Activated CD4-positive, alpha-beta memory T cell treated with anti-CD3 and anti-CD28 coated beads for 36 hours (primary cell): ENCODE measurements at regions of chr6 and their contacts with region 1.

Region 1: GRCh38 chr6:38713812-38714211 is 1.3 kb upstream of the DNAH8 start:
- DNase-seq: peak; percentile 83
- H3K4me3 Mint-ChIP-seq: no peak overlapping the region
- H3K27ac Mint-ChIP-seq: peak overlapping the region; percentile 46
- H3K4me1 Mint-ChIP-seq: peaks cover 15% of the 10 kb centered on the region
- H3K27me3 Mint-ChIP-seq: peaks cover 21% of the 10 kb centered on the region

Region 2: GRCh38 chr6:38702558-38703397 is 11.0 kb before region 1 on chr6 and contains the start of gene GLO1:
- CTCF ChIA-PET with region 1: interaction called, 3 read pairs
- POLR2A ChIA-PET with region 1: interaction called, 5 read pairs
- intact Hi-C with region 1: loop called (anchors 1 kb)
- DNase-seq: peak; percentile 98
- H3K4me3 Mint-ChIP-seq: peak within 1 kb of the TSS; percentile 82
- H3K27ac Mint-ChIP-seq: peak within 1 kb of the TSS; percentile 79
- H3K4me1 Mint-ChIP-seq: peaks cover 37% of the 10 kb centered on the region
- H3K27me3 Mint-ChIP-seq: peaks cover 9% of the 10 kb centered on the region
- total RNA-seq, gene GLO1: 132 to 133 TPM

Region 3: GRCh38 chr6:38755177-38755576 is 41.4 kb after region 1 on chr6:
- CTCF ChIA-PET with region 1: no interaction called
- POLR2A ChIA-PET with region 1: no interaction called
- intact Hi-C with region 1: no loop called
- DNase-seq: no peak
- H3K4me3 Mint-ChIP-seq: no peak overlapping the region
- H3K27ac Mint-ChIP-seq: no peak overlapping the region
- H3K4me1 Mint-ChIP-seq: peaks cover 21% of the 10 kb centered on the region
- H3K27me3 Mint-ChIP-seq: peaks cover 5% of the 10 kb centered on the region

Region 4: GRCh38 chr6:38797391-38797790 is 83.6 kb after region 1 on chr6:
- CTCF ChIA-PET with region 1: no interaction called
- POLR2A ChIA-PET with region 1: no interaction called
- intact Hi-C with region 1: no loop called
- DNase-seq: no peak
- H3K4me3 Mint-ChIP-seq: no peak overlapping the region
- H3K27ac Mint-ChIP-seq: no peak overlapping the region
- H3K4me1 Mint-ChIP-seq: no peaks in the 10 kb centered on the region
- H3K27me3 Mint-ChIP-seq: peaks cover 46% of the 10 kb centered on the region